CD4-positive, alpha-beta T cell (primary cell): ENCODE measurements at regions of chrX and their contacts with region 1.

Region 1: DNA sequence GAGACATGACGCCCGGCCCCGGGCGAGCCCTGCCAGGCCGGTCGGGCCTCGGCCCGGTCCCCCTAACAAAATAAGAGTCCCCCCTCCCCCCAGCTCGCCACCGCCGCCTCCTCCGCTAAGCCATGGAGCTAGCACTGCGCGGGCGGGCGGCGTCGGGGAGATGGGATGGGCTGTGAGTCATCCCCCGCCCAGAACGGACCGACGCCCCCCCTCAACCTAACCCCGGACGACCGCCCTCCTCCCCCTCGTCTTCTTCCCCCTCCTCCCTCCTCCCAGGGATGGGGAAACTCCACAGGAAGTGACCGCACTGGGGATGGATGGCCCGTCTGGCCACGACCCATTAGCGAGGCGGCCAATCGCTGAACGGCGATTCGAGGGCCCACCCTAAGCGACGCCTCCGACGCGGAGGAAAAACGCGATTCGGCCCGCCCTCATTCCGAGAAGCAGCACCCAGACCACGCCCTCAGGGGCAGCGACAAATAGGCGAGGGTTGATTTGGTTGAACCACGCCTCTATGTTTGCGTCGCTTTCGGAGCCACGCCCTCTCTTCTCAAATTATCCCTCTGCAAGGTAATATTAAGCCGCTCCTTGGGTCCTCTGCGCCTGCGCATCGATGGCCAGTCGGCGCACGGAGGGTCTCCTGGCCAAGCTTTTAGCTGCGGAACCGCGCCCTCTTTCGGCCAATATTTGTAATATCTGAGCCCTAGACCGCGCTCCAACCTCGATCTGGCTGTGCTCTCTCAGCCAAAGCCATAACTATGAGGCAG is at the start of gene TFE3:
- DNase-seq: peak; percentile 87 to 99 (median 93)
- ATAC-seq: peak; percentile 86
- H3K4me3 ChIP-seq: peak within 1 kb of the TSS; percentile 66
- H3K4me3 Mint-ChIP-seq: peak within 1 kb of the TSS; percentile 96
- H3K27ac ChIP-seq: peak within 1 kb of the TSS; percentile 84 to 88
- H3K27ac Mint-ChIP-seq: peak within 1 kb of the TSS; percentile 94
- H3K4me1 ChIP-seq: peaks cover 42% of the 10 kb centered on the region
- H3K4me1 Mint-ChIP-seq: peaks cover 39% of the 10 kb centered on the region
- H3K27me3 ChIP-seq: no peaks in the 10 kb centered on the region
- H3K27me3 Mint-ChIP-seq: no peaks in the 10 kb centered on the region
- CTCF ChIP-seq: peak; percentile 41
- total RNA-seq, gene TFE3: 38.6 to 40.9 TPM

Region 2: GRCh38 chrX:48891402-48892288 is 151.8 kb before region 1 on chrX:
- CTCF ChIA-PET with region 1: no interaction called
- POLR2A ChIA-PET with region 1: no interaction called
- intact Hi-C with region 1: loop called (anchors 5 kb)
- DNase-seq: peak; percentile 52 to 90 (median 72)
- ATAC-seq: peak; percentile 88
- H3K4me3 ChIP-seq: peak overlapping the region; percentile 60
- H3K4me3 Mint-ChIP-seq: peak overlapping the region; percentile 86
- H3K27ac ChIP-seq: peak overlapping the region in 1 of 2 donors; percentile 29
- H3K27ac Mint-ChIP-seq: peak overlapping the region; percentile 71
- H3K4me1 ChIP-seq: peaks cover 27% of the 10 kb centered on the region
- H3K4me1 Mint-ChIP-seq: peaks cover 26% of the 10 kb centered on the region
- H3K27me3 ChIP-seq: no peaks in the 10 kb centered on the region
- H3K27me3 Mint-ChIP-seq: no peaks in the 10 kb centered on the region
- CTCF ChIP-seq: peak; percentile 40

Region 3: DNA sequence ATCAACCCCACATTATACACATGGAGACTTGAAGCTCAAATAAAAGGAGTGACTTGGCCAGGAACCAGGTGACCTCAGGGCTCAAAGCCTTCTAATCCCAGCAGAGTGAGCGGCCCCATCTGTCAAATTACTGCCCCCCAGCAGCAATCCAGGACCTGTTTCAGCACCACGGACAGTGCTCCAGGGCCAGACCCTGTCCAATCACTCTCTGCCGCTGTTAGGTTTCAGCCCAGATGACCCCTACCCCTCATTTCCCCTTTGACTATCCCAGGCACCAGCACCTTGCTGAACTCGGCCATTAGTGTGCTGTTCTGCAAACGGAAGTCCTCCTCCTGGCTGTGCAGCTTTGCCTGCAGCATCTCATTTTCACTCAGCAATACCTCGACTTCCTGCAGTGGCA is 46.4 kb before region 1 on chrX:
- CTCF ChIA-PET with region 1: no interaction called
- POLR2A ChIA-PET with region 1: interaction called, 30 read pairs
- intact Hi-C with region 1: loop called (anchors 2 kb)
- DNase-seq: peak in 3 of 14 experiments; percentile 10 to 28 (median 24)
- ATAC-seq: no peak
- H3K4me3 ChIP-seq: no peak overlapping the region
- H3K4me3 Mint-ChIP-seq: no peak overlapping the region
- H3K27ac ChIP-seq: no peak overlapping the region
- H3K27ac Mint-ChIP-seq: no peak overlapping the region
- H3K4me1 ChIP-seq: peaks cover 24% of the 10 kb centered on the region
- H3K4me1 Mint-ChIP-seq: peaks cover 20% of the 10 kb centered on the region
- H3K27me3 ChIP-seq: no peaks in the 10 kb centered on the region
- H3K27me3 Mint-ChIP-seq: no peaks in the 10 kb centered on the region
- CTCF ChIP-seq: no peak

Region 4: GRCh38 chrX:49073601-49074571 is 30.5 kb after region 1 on chrX and contains the start of gene PRAF2:
- CTCF ChIA-PET with region 1: no interaction called
- POLR2A ChIA-PET with region 1: interaction called, 14 read pairs
- intact Hi-C with region 1: loop called (anchors 2 to 5 kb)
- DNase-seq: peak; percentile 75 to 95 (median 88)
- ATAC-seq: peak; percentile 98
- H3K4me3 ChIP-seq: peak within 1 kb of the TSS; percentile 72
- H3K4me3 Mint-ChIP-seq: peak within 1 kb of the TSS; percentile 84
- H3K27ac ChIP-seq: peak within 1 kb of the TSS; percentile 60 to 66
- H3K27ac Mint-ChIP-seq: peak within 1 kb of the TSS; percentile 91
- H3K4me1 ChIP-seq: peaks cover 25% of the 10 kb centered on the region
- H3K4me1 Mint-ChIP-seq: peaks cover 20% of the 10 kb centered on the region
- H3K27me3 ChIP-seq: no peaks in the 10 kb centered on the region
- H3K27me3 Mint-ChIP-seq: no peaks in the 10 kb centered on the region
- CTCF ChIP-seq: no peak
- total RNA-seq, gene PRAF2: 17.1 to 21.0 TPM

Region 5: GRCh38 chrX:49100704-49101628 is 57.6 kb after region 1 on chrX:
- CTCF ChIA-PET with region 1: no interaction called
- POLR2A ChIA-PET with region 1: interaction called, 7 read pairs
- intact Hi-C with region 1: loop called in 1 of 2 experiments (anchors 2 kb)
- DNase-seq: peak; percentile 75 to 95 (median 84)
- ATAC-seq: peak; percentile 90
- H3K4me3 ChIP-seq: peak overlapping the region; percentile 66
- H3K4me3 Mint-ChIP-seq: peak overlapping the region; percentile 94
- H3K27ac ChIP-seq: peak overlapping the region; percentile 75 to 81
- H3K27ac Mint-ChIP-seq: peak overlapping the region; percentile 87
- H3K4me1 ChIP-seq: peaks cover 17% of the 10 kb centered on the region
- H3K4me1 Mint-ChIP-seq: peaks cover 11% of the 10 kb centered on the region
- H3K27me3 ChIP-seq: no peaks in the 10 kb centered on the region
- H3K27me3 Mint-ChIP-seq: no peaks in the 10 kb centered on the region
- CTCF ChIP-seq: no peak